ENCODE measurements at regions of chr15 and their contacts with region 1.

Region 1: DNA sequence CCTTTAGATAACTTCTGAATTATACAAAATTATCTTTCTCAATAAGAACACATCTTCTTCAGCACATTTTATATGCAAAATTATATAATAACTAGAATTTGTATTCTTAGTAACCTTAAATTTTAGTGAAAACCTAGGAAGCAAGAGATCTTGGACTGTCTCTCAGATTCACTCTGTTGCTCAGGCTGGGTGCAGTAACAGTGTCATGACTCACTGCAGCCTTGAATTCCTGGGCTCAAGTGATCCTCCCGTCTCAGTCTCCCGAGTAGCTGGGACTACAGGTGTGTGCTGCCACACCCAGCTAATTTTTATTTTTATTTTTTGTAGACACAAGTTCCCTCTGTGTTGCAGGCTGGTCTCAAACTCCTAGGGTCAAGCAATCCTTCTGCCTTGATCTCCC is 29.9 kb downstream of the MKRN3 start:
- DNase-seq: no peak
- ATAC-seq: no peak
- H3K4me3 ChIP-seq: no peak overlapping the region
- H3K27ac ChIP-seq: no peak overlapping the region
- H3K4me1 ChIP-seq: no peaks in the 10 kb centered on the region
- H3K27me3 ChIP-seq: no peaks in the 10 kb centered on the region
- CTCF ChIP-seq: no peak
- EP300 ChIP-seq: no peak
- POLR2A ChIP-seq: no peak
- RAD21 ChIP-seq: no peak

Region 2: DNA sequence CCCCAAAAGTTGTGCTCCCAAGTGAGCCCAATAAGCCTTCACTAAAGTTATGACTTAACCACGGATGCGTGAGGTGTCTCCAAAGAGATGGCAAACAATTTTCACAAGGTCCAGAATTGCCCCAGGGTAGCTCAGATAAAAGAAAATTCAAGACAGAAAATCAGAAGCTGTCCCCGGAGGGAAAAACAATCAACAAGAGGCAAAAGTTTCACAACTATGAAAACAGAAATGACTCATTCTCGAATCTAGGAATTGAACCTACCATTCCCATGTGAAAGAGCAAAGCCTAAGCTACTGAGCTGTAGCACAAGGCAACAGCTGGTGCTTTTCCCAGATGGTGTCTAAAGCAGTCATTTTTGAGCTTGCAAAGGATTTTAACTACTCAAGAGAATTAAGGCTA is 63.3 kb before region 1 on chr15:
- CTCF ChIA-PET with region 1: no interaction called
- POLR2A ChIA-PET with region 1: no interaction called
- in situ Hi-C with region 1: no loop called
- intact Hi-C with region 1: loop called (anchors 10 kb)
- DNase-seq: no peak
- ATAC-seq: no peak
- H3K4me3 ChIP-seq: no peak overlapping the region
- H3K27ac ChIP-seq: no peak overlapping the region
- H3K4me1 ChIP-seq: no peaks in the 10 kb centered on the region
- H3K27me3 ChIP-seq: no peaks in the 10 kb centered on the region
- CTCF ChIP-seq: no peak
- EP300 ChIP-seq: no peak
- POLR2A ChIP-seq: no peak
- RAD21 ChIP-seq: no peak